Right cardiac atrium (tissue), 5 donors: ENCODE measurements at regions of chr5 and their contacts with region 1.

Region 1: GRCh38 chr5:38809388-38810359 is 36.1 kb upstream of the OSMR start:
- DNase-seq: peak; percentile 81 to 94 (median 89)
- ATAC-seq: peak; percentile 87 to 88
- H3K4me3 ChIP-seq: no peak overlapping the region
- H3K27ac ChIP-seq: peak overlapping the region; percentile 13
- H3K4me1 ChIP-seq: peaks cover 3% of the 10 kb centered on the region
- H3K27me3 ChIP-seq: no peaks in the 10 kb centered on the region

Region 2: DNA sequence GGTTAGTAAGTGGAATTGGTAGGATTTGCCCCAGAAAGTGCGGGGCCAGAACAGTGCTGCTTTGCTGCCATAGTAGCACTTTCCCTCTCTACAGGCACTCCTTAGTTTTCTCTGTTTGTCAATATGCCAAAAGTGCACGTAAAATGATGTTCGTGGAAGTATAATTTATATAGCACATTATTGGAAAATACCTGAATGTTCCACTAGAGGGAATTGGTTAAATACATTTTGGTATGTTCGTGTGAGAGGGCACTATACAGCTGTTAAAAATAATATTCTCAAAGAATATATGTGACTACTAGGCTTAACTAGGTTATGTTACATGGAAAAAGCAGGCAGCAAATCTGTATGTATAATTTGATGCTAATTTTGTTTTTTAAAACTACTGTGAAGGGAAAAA is 785.9 kb before region 1 on chr5:
- intact Hi-C with region 1: no loop called
- DNase-seq: no peak
- ATAC-seq: no peak
- H3K4me3 ChIP-seq: no peak overlapping the region
- H3K27ac ChIP-seq: no peak overlapping the region
- H3K4me1 ChIP-seq: no peaks in the 10 kb centered on the region
- H3K27me3 ChIP-seq: no peaks in the 10 kb centered on the region

Region 3: DNA sequence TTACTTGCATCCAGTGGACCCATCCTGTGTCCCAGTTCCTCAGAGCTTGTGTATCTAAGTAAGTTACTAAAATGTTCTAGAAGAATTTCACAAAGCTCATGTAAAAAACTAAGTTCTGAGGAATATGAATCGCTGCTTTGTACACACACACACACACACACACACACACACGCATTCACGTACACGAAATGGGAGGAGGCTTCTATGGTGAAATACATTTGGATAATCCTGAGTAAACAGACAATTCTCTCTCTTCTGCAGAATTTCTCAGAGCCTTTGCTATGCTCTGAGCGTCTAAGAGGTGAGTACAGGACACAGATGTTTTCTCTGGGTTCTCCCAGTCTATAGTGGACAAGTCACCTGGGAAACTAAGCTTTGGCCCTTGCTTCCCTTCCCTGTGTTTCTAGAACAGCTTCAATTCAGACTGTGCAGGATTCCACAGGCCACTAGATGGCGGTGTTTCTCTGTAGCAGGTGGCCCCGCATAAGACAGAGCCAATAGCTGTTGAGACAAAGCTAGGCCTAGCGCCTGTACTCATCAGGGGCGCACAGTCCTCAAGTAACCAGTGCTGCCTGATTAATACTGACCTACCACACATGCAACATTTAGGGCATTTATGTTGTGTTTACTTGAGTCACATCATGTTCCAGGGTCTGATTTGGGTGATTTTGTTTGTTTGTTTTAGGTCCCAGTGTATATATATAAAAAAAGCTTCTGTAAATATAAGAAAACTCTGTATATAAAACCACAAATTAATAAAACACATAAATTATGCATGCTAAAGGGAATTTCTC is 368.0 kb before region 1 on chr5:
- intact Hi-C with region 1: loop called (anchors 2 to 10 kb)
- DNase-seq: peak; percentile 87 to 94 (median 87)
- ATAC-seq: peak; percentile 92 to 93
- H3K4me3 ChIP-seq: no peak overlapping the region
- H3K27ac ChIP-seq: no peak overlapping the region
- H3K4me1 ChIP-seq: no peaks in the 10 kb centered on the region
- H3K27me3 ChIP-seq: no peaks in the 10 kb centered on the region

Region 4: DNA sequence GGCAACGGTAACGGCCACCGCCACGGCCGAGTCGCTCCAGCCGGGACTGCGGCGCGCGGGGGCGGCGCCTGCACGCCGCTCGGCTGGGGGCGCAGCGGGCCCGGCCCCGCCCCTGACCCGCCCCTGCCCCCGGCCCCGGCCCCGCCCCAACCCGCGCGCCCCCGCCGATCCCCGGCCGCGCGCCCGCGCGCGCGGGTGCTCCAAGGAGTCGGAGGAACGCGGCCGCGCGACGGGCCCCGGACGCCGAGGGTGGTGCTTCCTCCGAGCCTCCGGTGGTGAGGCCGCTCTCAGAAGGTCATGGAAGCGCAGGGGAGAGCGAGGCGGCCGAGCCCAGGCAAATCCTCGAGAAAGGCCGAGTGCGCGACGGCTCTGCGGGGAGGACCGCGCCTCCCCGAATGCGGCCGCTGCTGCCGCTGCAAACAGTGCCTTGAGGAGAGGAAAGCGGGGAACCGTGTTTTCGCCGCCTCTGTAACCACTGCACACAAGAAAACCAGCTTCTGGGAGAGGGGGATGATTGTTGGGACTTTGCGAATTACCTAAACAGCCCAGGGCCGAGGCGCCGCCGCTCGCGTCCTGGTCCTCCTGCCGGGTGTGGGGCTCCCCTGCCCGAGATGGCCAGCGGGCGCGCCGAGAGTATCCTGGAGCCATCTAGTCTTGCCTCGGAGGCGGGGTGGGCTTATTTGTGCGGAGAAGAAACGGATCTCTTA is 252.9 kb before region 1 on chr5 and contains the start of gene LIFR:
- intact Hi-C with region 1: loop called in 2 of 4 experiments (anchors 10 kb)
- DNase-seq: peak; percentile 87 to 95 (median 94)
- ATAC-seq: peak; percentile 90 to 91
- H3K4me3 ChIP-seq: peak within 1 kb of the TSS; percentile 99
- H3K27ac ChIP-seq: peak within 1 kb of the TSS; percentile 97
- H3K4me1 ChIP-seq: peaks cover 4% of the 10 kb centered on the region
- H3K27me3 ChIP-seq: no peaks in the 10 kb centered on the region
- total RNA-seq, gene LIFR: 45.3 to 66.9 (median 63.4) TPM

Region 5: GRCh38 chr5:38672059-38672788 is 137.4 kb before region 1 on chr5:
- intact Hi-C with region 1: loop called in 3 of 4 experiments (anchors 10 kb)
- DNase-seq: no peak
- ATAC-seq: peak; percentile 36 to 42
- H3K4me3 ChIP-seq: no peak overlapping the region
- H3K27ac ChIP-seq: no peak overlapping the region
- H3K4me1 ChIP-seq: peaks cover 4% of the 10 kb centered on the region
- H3K27me3 ChIP-seq: no peaks in the 10 kb centered on the region

Region 6: GRCh38 chr5:38853753-38854463 is 44.2 kb after region 1 on chr5:
- intact Hi-C with region 1: no loop called
- DNase-seq: no peak
- ATAC-seq: peak; percentile 38 to 45
- H3K4me3 ChIP-seq: no peak overlapping the region
- H3K27ac ChIP-seq: no peak overlapping the region
- H3K4me1 ChIP-seq: peaks cover 7% of the 10 kb centered on the region
- H3K27me3 ChIP-seq: no peaks in the 10 kb centered on the region